ENCODE measurements at regions of chr7 and their contacts with region 1.

Region 1: GRCh38 chr7:16564909-16565426 is 38.3 kb downstream of the LRRC72 start:
- DNase-seq: no peak
- H3K4me3 ChIP-seq: no peak overlapping the region
- H3K27ac ChIP-seq: no peak overlapping the region
- H3K4me1 ChIP-seq: no peaks in the 10 kb centered on the region
- H3K27me3 ChIP-seq: no peaks in the 10 kb centered on the region
- CTCF ChIP-seq: peak; percentile 58

Region 2: DNA sequence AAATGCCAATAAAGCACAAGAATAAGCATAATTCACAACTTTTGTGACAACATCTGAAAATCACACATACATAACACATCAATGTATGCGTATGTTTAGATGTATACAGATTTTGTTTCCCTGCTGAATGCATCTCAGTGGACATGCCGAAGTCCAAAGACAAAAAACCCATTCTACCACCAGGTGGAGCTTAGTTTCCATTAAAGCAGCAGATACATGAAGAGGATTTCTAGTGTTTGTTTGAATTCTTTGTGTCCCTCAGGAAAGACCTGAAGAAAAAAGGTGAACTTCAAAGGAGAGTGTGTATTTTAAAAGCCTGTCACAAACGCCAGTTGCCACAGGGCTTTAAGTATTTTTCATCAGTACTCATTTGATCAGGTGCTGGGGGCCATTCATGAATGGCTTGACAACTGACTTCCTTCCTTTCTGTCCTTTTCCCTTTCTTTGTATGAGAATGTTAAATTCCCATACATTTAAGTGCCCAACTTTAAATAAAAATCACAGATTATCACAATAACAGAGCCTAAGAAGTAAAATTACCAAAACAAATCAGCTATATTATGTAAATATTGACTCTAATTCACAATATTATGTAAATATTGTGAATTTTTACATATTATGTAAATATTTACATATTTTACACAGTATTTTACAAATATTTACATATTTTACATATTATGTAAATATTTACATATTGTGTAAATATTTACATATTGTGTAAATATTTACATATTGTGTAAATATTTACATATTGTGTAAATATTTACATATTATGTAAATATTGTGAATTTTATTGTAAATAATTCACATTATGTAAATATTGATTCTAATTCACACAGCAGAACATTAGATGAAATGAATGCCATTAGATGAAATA is 486.7 kb before region 1 on chr7:
- intact Hi-C with region 1: loop called (anchors 5 kb)
- DNase-seq: peak; percentile 60
- H3K4me3 ChIP-seq: no peak overlapping the region
- H3K27ac ChIP-seq: no peak overlapping the region
- H3K4me1 ChIP-seq: no peaks in the 10 kb centered on the region
- H3K27me3 ChIP-seq: no peaks in the 10 kb centered on the region
- CTCF ChIP-seq: peak; percentile 38

Region 3: GRCh38 chr7:16114633-16115032 is 450.3 kb before region 1 on chr7:
- intact Hi-C with region 1: loop called (anchors 5 kb)
- DNase-seq: no peak
- H3K4me3 ChIP-seq: no peak overlapping the region
- H3K27ac ChIP-seq: no peak overlapping the region
- H3K4me1 ChIP-seq: no peaks in the 10 kb centered on the region
- H3K27me3 ChIP-seq: no peaks in the 10 kb centered on the region
- CTCF ChIP-seq: no peak

Region 4: GRCh38 chr7:16431646-16432424 is 133.1 kb before region 1 on chr7:
- intact Hi-C with region 1: loop called (anchors 5 kb)
- DNase-seq: peak; percentile 50
- H3K4me3 ChIP-seq: no peak overlapping the region
- H3K27ac ChIP-seq: no peak overlapping the region
- H3K4me1 ChIP-seq: no peaks in the 10 kb centered on the region
- H3K27me3 ChIP-seq: no peaks in the 10 kb centered on the region
- CTCF ChIP-seq: peak; percentile 35

Region 5: GRCh38 chr7:16465469-16466361 is 99.3 kb before region 1 on chr7 and contains the start of gene SOSTDC1:
- intact Hi-C with region 1: no loop called
- DNase-seq: peak; percentile 54
- H3K4me3 ChIP-seq: peak within 1 kb of the TSS; percentile 7
- H3K27ac ChIP-seq: peak within 1 kb of the TSS; percentile 32
- H3K4me1 ChIP-seq: no peaks in the 10 kb centered on the region
- H3K27me3 ChIP-seq: no peaks in the 10 kb centered on the region
- CTCF ChIP-seq: no peak
- total RNA-seq, gene SOSTDC1: 4.7 to 7.2 TPM

Region 6: GRCh38 chr7:16634271-16634738 is 69.3 kb after region 1 on chr7:
- intact Hi-C with region 1: no loop called
- DNase-seq: peak; percentile 43
- H3K4me3 ChIP-seq: no peak overlapping the region
- H3K27ac ChIP-seq: peak overlapping the region; percentile 67
- H3K4me1 ChIP-seq: no peaks in the 10 kb centered on the region
- H3K27me3 ChIP-seq: no peaks in the 10 kb centered on the region
- CTCF ChIP-seq: no peak

Region 7: GRCh38 chr7:16645593-16646471 is 80.9 kb after region 1 on chr7 and contains the starts of genes ANKMY2 and BZW2:
- intact Hi-C with region 1: no loop called
- DNase-seq: peak; percentile 95
- H3K4me3 ChIP-seq: peak within 1 kb of the TSS; percentile 96
- H3K27ac ChIP-seq: peak within 1 kb of the TSS; percentile 91
- H3K4me1 ChIP-seq: peaks cover 9% of the 10 kb centered on the region
- H3K27me3 ChIP-seq: no peaks in the 10 kb centered on the region
- CTCF ChIP-seq: no peak
- total RNA-seq, gene ANKMY2: 17.8 to 31.4 TPM
- total RNA-seq, gene BZW2: 56.1 to 73.8 TPM

Measured in colonic mucosa (tissue), 4 donors.